ENCODE measurements at regions of chr4 and their contacts with region 1.

Region 1: DNA sequence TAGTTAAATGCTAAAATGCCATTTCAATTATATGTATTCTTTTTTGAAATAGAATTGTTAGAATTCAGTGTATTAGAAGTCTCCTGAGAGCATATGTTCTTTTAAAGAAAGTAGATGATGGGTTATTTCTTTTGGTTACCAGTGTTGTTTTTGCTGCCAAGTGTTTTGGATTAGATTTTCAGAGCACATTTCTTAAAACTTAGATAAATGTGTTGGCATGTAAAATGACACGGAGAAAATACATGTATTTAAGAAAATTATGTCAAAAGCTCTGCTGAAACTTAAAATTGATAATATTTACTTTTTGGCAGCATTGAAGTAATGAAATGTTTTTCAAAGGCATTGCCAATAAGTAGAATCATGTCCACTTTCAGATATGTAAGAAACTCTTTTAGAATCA is 379.7 kb downstream of the ADGRL3 start:
- DNase-seq: no peak
- H3K4me3 ChIP-seq: no peak overlapping the region
- H3K27ac ChIP-seq: no peak overlapping the region
- H3K4me1 ChIP-seq: no peaks in the 10 kb centered on the region
- H3K27me3 ChIP-seq: no peaks in the 10 kb centered on the region
- CTCF ChIP-seq: no peak
- POLR2A ChIP-seq: no peak

Region 2: DNA sequence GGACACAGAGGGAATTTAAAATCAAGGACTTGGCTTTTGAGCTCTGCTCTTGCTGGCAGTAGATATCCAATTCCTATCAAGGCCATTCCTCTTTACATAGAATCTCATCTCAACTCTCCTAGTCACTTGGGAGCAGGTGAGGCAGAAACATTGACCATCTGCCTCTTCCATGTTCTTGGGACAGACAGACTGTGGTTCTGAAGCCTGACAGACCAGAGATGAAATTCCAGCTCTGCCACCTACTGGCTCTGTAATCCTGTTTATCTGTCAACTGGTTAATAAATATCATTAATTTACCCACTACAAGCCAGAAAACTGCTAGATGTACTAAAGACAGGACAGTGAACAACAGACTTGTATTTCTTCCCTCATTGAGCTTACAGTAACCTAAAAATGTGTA is 78.9 kb before region 1 on chr4:
- intact Hi-C with region 1: loop called (anchors 5 kb)
- DNase-seq: no peak
- H3K4me3 ChIP-seq: no peak overlapping the region
- H3K27ac ChIP-seq: no peak overlapping the region
- H3K4me1 ChIP-seq: no peaks in the 10 kb centered on the region
- H3K27me3 ChIP-seq: no peaks in the 10 kb centered on the region
- CTCF ChIP-seq: no peak
- POLR2A ChIP-seq: no peak

Measured in breast epithelium (tissue), 4 donors.